ENCODE measurements at regions of chr5 and their contacts with region 1.

Region 1: GRCh38 chr5:91419571-91420537 is 36.7 kb upstream of the ARRDC3 start:
- DNase-seq: peak; percentile 66

Region 2: DNA sequence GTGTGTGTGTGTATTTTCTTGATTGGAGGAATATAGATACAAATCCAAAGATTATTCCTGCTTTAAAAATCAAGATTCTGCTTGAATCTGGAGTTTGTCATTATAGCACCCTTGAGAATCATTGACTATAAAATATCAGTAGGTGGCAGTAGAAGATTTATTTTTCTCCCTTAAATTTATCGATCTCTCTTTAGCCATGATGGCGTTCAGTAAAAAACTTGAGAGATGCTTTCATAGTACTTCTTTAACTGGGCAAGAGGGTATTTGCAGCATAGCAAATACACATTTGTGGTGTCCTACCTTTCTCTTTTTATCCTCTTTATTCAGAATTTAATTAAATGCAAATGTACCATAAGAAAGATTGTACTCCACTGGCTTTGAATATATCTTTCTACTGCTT is 553.5 kb before region 1 on chr5:
- in situ Hi-C with region 1: loop called (anchors 25 kb)
- DNase-seq: peak; percentile 73

Region 3: DNA sequence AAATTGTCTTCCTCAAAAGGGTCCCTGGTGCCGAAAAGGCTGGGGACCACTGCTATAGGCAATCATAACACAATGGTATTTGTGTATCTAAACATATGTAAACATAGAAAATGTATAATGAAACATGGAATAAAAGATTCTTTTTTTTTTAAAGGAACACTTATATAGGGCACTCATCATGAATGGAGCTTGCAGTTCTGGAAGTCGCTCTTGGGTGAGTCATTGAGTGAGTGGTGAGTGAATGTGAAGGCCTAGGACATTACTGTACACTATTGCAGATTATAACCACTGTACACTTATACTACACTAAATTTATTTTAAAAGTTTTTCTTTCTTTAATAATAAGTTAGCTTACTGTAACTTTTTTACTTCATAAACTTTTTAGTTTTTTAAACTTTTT is 213.1 kb before region 1 on chr5:
- in situ Hi-C with region 1: no loop called
- DNase-seq: no peak